ENCODE measurements at regions of chr4 and their contacts with region 1.

Region 1: DNA sequence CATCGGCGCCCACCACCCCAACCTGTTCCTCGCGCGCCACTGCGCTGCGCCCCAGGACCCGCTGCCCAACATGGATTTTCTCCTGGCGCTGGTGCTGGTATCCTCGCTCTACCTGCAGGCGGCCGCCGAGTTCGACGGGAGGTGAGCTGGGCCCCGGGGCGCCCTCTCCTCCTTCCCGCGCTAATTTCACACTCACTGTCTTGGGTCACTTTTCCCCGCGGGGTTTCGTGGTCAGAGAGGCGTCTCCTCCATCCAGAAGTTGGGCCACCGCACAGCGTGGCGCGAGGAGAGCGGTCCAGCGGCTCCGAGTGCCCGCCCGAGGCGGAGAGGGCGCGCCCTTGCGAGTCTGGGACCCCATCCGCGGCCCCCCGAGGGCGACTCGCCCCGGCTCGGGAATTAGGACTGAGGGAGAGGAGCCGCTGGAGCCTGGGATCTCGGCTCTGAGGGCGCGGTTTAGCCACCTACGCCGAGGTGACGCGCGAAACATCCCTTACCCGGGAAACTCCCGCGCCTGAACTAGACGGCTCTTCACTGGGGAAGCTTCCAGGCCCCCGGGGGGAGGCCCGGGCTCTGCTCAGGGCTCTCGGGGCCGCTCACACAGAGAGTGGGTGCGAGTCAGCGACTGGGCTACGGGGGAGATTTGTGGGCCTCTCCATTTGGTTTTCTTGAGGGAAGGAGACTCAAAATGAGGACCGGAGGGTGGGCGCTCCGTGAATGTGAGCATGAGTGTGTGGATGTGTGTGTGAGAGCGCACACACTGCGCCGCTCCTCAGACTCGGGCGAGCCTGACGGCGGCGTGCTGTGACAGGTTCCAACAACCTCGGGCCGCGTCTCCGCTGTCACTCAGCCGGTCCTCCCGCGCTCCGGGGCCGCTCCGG is 551 bp downstream of the NPNT start:
- DNase-seq: peak; percentile 53 to 82
- ATAC-seq: peak; percentile 78
- H3K4me3 ChIP-seq: peak overlapping the region; percentile 58 to 66
- H3K27ac ChIP-seq: peak overlapping the region; percentile 23 to 46
- H3K4me1 ChIP-seq: peaks cover 2 to 5% of the 10 kb centered on the region in 2 donors
- H3K27me3 ChIP-seq: no peaks in the 10 kb centered on the region

Region 2: DNA sequence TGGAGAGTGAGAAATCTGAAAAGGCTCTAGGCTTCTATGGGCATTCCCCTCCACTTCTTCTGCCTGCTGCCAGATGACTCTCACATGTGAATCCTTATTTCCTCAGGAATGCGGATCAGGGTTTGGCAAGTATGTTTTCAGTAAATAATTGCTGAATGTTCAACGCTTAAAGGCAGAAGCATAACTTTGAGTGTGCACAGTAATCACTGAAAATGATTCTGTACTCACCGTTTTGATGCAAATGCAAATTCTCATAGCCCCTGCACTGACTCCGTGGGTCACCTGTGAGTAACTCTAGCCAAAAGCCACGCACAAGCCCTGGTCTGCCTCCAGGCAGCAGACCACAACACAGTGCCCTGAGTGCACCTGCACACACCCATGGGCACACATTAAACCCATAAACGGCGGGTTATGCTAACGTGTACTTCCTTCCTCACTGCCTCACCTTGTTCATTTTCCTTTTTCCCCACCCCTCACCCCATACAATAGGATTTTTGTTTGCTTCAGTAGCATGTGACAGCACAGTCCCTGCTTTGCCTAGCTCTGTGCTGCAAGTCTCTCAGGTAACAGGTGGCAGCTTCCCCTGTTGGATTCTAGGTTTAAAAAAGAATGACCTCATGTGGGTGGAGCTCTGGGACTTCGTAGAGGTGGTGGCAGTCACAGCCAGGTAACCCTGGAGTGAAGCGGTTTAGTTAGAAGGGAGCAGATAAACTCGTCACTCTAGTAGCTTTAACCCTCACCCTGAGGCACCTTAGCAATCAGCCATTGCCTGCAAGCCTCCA is 343.7 kb before region 1 on chr4 and contains the start of gene ARHGEF38:
- intact Hi-C with region 1: no loop called
- DNase-seq: no peak
- ATAC-seq: peak; percentile 54
- H3K4me3 ChIP-seq: no peak within 1 kb of the TSS
- H3K27ac ChIP-seq: no peak within 1 kb of the TSS
- H3K4me1 ChIP-seq: no peaks in the 10 kb centered on the region
- H3K27me3 ChIP-seq: no peaks in the 10 kb centered on the region
- total RNA-seq, gene ARHGEF38: not detected

Region 3: DNA sequence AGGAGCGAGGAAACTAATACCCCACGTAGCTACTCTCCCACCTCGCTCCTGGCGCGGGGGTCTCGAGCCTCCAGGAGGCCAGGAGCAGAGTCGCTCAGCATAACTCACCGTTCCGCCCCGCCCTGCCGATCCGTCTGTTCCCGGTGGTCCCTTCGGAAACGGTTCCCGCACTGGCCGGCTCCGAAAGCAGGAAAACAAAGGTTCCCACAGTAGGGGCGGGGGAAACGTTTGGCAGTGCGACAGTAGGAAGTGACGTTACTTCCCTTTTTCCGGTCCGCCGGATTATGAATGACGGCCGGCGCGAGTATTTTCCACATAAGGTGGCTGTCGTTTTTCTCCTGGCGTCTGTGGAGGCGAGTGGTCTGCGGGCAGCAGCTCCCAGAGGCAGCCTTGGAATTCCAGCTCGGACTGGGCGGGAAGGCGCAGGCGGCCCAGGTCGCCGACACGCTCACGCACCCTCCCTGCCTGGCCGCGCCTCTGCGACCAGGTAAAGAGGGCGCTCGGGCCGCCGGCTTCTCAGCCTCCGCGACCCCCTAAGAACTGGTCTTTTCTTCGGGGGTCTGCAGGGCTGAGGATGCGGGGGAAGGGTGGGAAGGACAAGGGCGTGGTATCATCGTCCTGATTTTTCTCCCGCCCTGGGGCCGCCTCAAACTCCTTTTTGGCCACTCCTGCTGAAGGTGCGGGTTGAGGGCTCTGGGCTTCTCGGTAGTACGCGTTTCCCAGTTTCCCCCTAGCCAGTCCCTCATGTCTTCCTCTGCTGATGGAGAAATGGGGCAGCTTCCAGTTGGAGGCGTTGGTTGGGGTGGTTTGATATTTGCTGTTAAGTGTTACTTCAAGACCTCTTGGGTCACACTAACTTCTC is 187.1 kb before region 1 on chr4 and contains the starts of genes GSTCD and INTS12:
- intact Hi-C with region 1: loop called in 1 of 2 experiments (anchors 2 kb)
- DNase-seq: peak; percentile 94 to 96
- ATAC-seq: peak; percentile 98
- H3K4me3 ChIP-seq: peak within 1 kb of the TSS; percentile 72 to 82
- H3K27ac ChIP-seq: peak within 1 kb of the TSS in 1 of 2 donors; percentile 43
- H3K4me1 ChIP-seq: peaks cover 0 to 3% of the 10 kb centered on the region in 2 donors
- H3K27me3 ChIP-seq: no peaks in the 10 kb centered on the region
- total RNA-seq, gene GSTCD: 8.2 to 8.4 TPM
- total RNA-seq, gene INTS12: 19.2 to 21.4 TPM

Region 4: GRCh38 chr4:105808750-105809041 is 87.1 kb before region 1 on chr4:
- intact Hi-C with region 1: loop called (anchors 10 kb)
- DNase-seq: peak in 1 of 2 donors; percentile 48
- ATAC-seq: peak; percentile 52
- H3K4me3 ChIP-seq: peak overlapping the region; percentile 47 to 84
- H3K27ac ChIP-seq: peak overlapping the region in 1 of 2 donors; percentile 28
- H3K4me1 ChIP-seq: peaks cover 2 to 3% of the 10 kb centered on the region in 2 donors
- H3K27me3 ChIP-seq: no peaks in the 10 kb centered on the region

Region 5: GRCh38 chr4:105840426-105841174 is 55.2 kb before region 1 on chr4:
- intact Hi-C with region 1: loop called in 1 of 2 experiments (anchors 10 kb)
- DNase-seq: no peak
- ATAC-seq: no peak
- H3K4me3 ChIP-seq: no peak overlapping the region
- H3K27ac ChIP-seq: no peak overlapping the region
- H3K4me1 ChIP-seq: peaks cover 0 to 2% of the 10 kb centered on the region in 2 donors
- H3K27me3 ChIP-seq: no peaks in the 10 kb centered on the region

Region 6: DNA sequence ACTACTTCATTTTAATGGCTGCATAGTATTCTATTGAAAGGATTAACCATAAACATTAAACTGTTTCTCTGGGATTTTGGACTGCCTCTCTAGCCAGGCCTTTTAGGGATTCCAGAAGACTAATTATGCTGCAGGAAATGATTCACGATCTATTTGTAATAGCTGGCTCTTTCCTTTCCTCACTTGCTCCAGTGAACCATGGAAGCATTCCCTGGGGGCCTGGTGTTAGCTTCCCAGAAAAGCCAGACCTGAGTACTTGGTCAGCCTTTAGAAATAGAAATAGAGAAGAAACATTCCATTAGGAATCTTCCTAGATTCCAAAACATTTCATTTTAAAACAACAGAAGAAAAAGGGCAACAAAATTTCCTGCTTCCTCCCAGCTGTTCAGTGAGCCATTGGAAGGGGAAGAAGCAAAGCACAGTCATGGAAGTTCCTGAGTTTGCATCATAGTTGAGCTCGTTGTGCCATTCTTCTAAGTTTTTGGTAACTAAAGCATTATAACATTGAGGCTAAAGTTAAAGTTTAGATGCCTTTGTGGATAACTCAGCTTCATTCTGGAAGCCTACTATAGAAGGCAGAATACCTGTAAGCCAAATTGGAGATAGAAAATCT is 83.0 kb after region 1 on chr4:
- intact Hi-C with region 1: loop called in 1 of 2 experiments (anchors 5 kb)
- DNase-seq: peak; percentile 78 to 84
- ATAC-seq: peak; percentile 80
- H3K4me3 ChIP-seq: no peak overlapping the region
- H3K27ac ChIP-seq: peak overlapping the region; percentile 6 to 45
- H3K4me1 ChIP-seq: no peaks in the 10 kb centered on the region
- H3K27me3 ChIP-seq: no peaks in the 10 kb centered on the region

Region 7: DNA sequence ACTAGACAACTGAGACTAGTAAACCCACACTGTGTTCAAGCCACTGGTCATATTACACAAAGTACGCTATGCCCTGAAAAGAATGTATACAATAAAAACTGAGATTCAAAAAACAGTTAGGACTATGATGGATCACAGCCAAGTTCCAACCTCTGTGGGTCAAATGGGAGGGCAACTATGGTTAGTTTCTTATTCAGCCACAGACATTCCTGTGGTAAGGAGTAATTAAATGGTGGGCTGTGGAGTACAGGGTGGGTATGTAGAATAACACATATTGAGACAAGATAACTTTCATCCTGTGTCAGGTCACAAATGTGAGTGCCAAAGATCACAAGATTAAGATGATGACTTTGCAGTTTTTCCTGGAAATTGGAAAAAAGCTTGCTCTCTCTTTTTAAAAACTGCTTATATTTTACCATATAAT is 166.6 kb after region 1 on chr4:
- intact Hi-C with region 1: loop called in 1 of 2 experiments (anchors 5 kb)
- DNase-seq: no peak
- ATAC-seq: no peak
- H3K4me3 ChIP-seq: no peak overlapping the region
- H3K27ac ChIP-seq: no peak overlapping the region
- H3K4me1 ChIP-seq: peaks cover 3% of the 10 kb centered on the region in 2 donors
- H3K27me3 ChIP-seq: no peaks in the 10 kb centered on the region

Region 8: DNA sequence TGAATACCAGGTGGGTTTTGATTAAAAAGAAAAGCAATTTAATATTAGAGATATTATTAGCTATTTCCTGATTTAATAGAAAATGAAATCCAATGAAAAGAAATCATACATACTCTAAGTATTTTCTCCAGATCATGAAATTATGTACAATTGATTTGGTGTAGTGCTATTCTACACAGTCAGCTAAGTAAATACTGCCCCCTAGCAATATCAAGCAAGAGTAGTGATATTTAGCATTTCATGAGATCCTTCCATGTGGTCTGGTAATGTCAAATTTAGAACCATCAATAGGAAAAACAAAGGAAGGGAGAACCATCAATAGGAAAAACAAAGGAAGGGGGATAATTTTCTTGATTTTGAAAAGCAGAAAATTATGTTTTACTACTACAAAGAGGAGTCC is 305.6 kb after region 1 on chr4:
- intact Hi-C with region 1: loop called in 1 of 2 experiments (anchors 10 kb)
- DNase-seq: no peak
- ATAC-seq: no peak
- H3K4me3 ChIP-seq: no peak overlapping the region
- H3K27ac ChIP-seq: no peak overlapping the region
- H3K4me1 ChIP-seq: peaks cover 0 to 4% of the 10 kb centered on the region in 2 donors
- H3K27me3 ChIP-seq: no peaks in the 10 kb centered on the region